ENCODE measurements at regions of chr2 and their contacts with region 1.

Region 1: GRCh38 chr2:68715353-68716041 is 19.1 kb upstream of the ARHGAP25 start:
- DNase-seq: peak; percentile 39 to 55 (median 45)
- H3K4me3 ChIP-seq: peak overlapping the region in 1 of 2 donors; percentile 37
- H3K4me3 Mint-ChIP-seq: peak overlapping the region in 7 of 8 donors; percentile 44 to 76 (median 56)
- H3K27ac ChIP-seq: peak overlapping the region; percentile 29
- H3K27ac Mint-ChIP-seq: peak overlapping the region; percentile 54 to 93 (median 86)
- H3K4me1 ChIP-seq: peaks cover 63% of the 10 kb centered on the region
- H3K4me1 Mint-ChIP-seq: peaks cover 63 to 88% (median 70%) of the 10 kb centered on the region in 4 donors
- H3K27me3 ChIP-seq: no peaks in the 10 kb centered on the region
- H3K27me3 Mint-ChIP-seq: no peaks in the 10 kb centered on the region

Region 2: GRCh38 chr2:68403199-68403644 is 312.3 kb before region 1 on chr2:
- CTCF ChIA-PET with region 1: no interaction called
- POLR2A ChIA-PET with region 1: no interaction called
- intact Hi-C with region 1: no loop called
- DNase-seq: peak in 1 of 5 donors; percentile 31
- H3K4me3 ChIP-seq: no peak overlapping the region
- H3K4me3 Mint-ChIP-seq: peak overlapping the region in 4 of 8 donors; percentile 30 to 66 (median 54)
- H3K27ac ChIP-seq: no peak overlapping the region
- H3K27ac Mint-ChIP-seq: peak overlapping the region in 5 of 7 donors; percentile 7 to 82 (median 43)
- H3K4me1 ChIP-seq: peaks cover 33% of the 10 kb centered on the region
- H3K4me1 Mint-ChIP-seq: peaks cover 6 to 37% (median 29%) of the 10 kb centered on the region in 4 donors
- H3K27me3 ChIP-seq: no peaks in the 10 kb centered on the region
- H3K27me3 Mint-ChIP-seq: peaks cover 0 to 18% of the 10 kb centered on the region in 2 donors

Region 3: GRCh38 chr2:68726608-68727367 is 11.3 kb after region 1 on chr2:
- CTCF ChIA-PET with region 1: interaction called, 92 read pairs
- POLR2A ChIA-PET with region 1: interaction called, 117 read pairs
- intact Hi-C with region 1: loop called (anchors 1 kb)
- DNase-seq: peak; percentile 78 to 93 (median 81)
- H3K4me3 ChIP-seq: peak overlapping the region; percentile 6 to 9
- H3K4me3 Mint-ChIP-seq: peak overlapping the region; percentile 18 to 73 (median 58)
- H3K27ac ChIP-seq: peak overlapping the region; percentile 44
- H3K27ac Mint-ChIP-seq: peak overlapping the region; percentile 83 to 95 (median 88)
- H3K4me1 ChIP-seq: peaks cover 74% of the 10 kb centered on the region
- H3K4me1 Mint-ChIP-seq: peaks cover 57 to 85% (median 72%) of the 10 kb centered on the region in 4 donors
- H3K27me3 ChIP-seq: no peaks in the 10 kb centered on the region
- H3K27me3 Mint-ChIP-seq: no peaks in the 10 kb centered on the region

Region 4: DNA sequence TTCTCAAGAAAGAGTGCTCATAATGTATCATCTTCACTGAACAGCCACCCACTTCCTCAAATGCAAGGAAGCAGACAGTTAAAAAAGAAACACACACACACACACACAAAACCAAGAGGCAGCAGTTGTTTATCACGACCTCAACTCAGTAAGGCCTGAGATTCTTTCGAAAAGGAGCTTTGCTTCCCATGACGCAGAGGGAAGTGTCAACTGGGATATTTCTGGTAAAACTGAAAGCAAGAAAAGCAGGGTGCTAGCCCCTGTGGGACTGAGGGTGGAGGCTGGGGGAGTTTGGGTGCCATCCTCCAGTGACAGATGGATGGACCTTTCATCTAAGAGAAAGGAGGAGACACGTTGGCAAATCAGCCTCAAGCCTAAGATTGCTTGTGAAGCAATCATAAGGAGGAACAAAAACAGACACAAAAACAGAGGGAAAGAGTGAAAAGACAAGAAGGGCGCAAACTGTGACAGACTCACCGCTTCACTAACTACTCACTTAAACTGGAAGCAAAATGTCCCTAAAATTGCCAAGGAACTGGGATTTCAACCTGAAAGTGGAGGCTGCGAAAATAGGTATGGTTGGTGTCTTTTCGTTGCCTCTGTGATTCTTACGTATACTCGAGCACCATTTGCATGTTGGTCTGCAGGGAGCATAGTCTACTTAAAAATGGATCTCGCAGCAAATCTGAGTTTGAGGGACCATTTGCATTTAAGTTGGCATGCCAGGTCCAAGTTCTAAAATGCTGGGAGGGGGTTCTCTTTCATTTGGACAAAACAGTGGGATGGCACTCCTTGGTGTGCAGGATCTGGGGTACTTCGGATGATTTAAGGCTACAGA is 19.4 kb after region 1 on chr2 and contains the start of gene ARHGAP25:
- CTCF ChIA-PET with region 1: interaction called, 745 read pairs
- POLR2A ChIA-PET with region 1: interaction called, 659 read pairs
- intact Hi-C with region 1: loop called (anchors 1 kb)
- DNase-seq: peak; percentile 58 to 79 (median 61)
- H3K4me3 ChIP-seq: peak within 1 kb of the TSS; percentile 83 to 99
- H3K4me3 Mint-ChIP-seq: no peak within 1 kb of the TSS
- H3K27ac ChIP-seq: peak within 1 kb of the TSS; percentile 81
- H3K27ac Mint-ChIP-seq: no peak within 1 kb of the TSS
- H3K4me1 ChIP-seq: peaks cover 54% of the 10 kb centered on the region
- H3K4me1 Mint-ChIP-seq: peaks cover 23 to 44% (median 34%) of the 10 kb centered on the region in 4 donors
- H3K27me3 ChIP-seq: no peaks in the 10 kb centered on the region
- H3K27me3 Mint-ChIP-seq: no peaks in the 10 kb centered on the region
- total RNA-seq, gene ARHGAP25: 162 to 163 TPM

Region 5: DNA sequence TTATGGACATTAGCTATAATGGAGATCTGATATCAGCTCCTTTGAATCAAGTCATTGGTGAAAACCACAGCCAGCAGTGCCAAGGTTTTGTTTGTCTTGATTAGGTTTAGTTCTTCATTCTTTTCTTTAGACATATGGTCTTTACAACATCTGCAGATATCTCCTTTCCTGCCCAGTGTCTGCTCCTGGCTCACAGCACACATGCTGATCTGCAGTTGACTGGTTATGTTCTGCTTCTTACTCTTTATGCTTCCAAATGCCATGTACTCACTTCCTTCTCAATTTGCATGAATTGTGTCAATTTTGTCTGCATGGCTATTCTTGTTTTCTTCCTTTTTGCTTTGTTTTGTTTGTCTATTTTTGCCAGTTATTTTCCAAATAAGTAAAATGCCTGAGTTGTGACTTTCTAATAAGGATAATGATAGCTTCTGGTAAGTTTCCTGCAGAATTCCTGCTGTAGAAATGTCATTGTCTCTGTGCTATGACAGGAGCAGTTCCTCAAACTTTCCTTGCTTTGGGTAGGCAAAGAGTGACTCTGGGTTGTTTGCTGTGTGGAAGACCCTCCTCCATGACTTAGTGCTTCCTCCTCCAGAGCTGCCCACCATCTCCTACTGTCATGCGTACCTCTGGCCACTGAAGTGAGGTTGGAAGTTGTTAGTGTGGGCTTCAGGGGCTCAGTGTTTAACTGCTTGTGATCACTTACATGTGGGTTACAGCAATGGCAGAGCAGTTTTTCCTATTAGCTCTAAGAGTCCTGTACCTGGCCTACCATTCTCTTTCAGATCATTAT is 27.3 kb after region 1 on chr2:
- CTCF ChIA-PET with region 1: interaction called, 745 read pairs
- POLR2A ChIA-PET with region 1: interaction called, 659 read pairs
- intact Hi-C with region 1: loop called (anchors 1 kb)
- DNase-seq: no peak
- H3K4me3 ChIP-seq: peak overlapping the region in 1 of 2 donors; percentile 29
- H3K4me3 Mint-ChIP-seq: peak overlapping the region; percentile 61 to 88 (median 79)
- H3K27ac ChIP-seq: no peak overlapping the region
- H3K27ac Mint-ChIP-seq: peak overlapping the region in 6 of 7 donors; percentile 78 to 93 (median 81)
- H3K4me1 ChIP-seq: peaks cover 99% of the 10 kb centered on the region
- H3K4me1 Mint-ChIP-seq: peaks cover 78 to 97% (median 89%) of the 10 kb centered on the region in 4 donors
- H3K27me3 ChIP-seq: no peaks in the 10 kb centered on the region
- H3K27me3 Mint-ChIP-seq: no peaks in the 10 kb centered on the region

Region 6: GRCh38 chr2:68774569-68775271 is 59.2 kb after region 1 on chr2:
- CTCF ChIA-PET with region 1: interaction called, 11 read pairs
- POLR2A ChIA-PET with region 1: interaction called, 23 read pairs
- intact Hi-C with region 1: loop called (anchors 2 kb)
- DNase-seq: peak; percentile 47 to 79 (median 51)
- H3K4me3 ChIP-seq: peak overlapping the region; percentile 57 to 63
- H3K4me3 Mint-ChIP-seq: peak overlapping the region; percentile 84 to 95 (median 87)
- H3K27ac ChIP-seq: peak overlapping the region; percentile 84
- H3K27ac Mint-ChIP-seq: peak overlapping the region; percentile 95 to 99 (median 97)
- H3K4me1 ChIP-seq: peaks cover 97% of the 10 kb centered on the region
- H3K4me1 Mint-ChIP-seq: peaks cover 78 to 90% (median 86%) of the 10 kb centered on the region in 4 donors
- H3K27me3 ChIP-seq: no peaks in the 10 kb centered on the region
- H3K27me3 Mint-ChIP-seq: no peaks in the 10 kb centered on the region

Region 7: DNA sequence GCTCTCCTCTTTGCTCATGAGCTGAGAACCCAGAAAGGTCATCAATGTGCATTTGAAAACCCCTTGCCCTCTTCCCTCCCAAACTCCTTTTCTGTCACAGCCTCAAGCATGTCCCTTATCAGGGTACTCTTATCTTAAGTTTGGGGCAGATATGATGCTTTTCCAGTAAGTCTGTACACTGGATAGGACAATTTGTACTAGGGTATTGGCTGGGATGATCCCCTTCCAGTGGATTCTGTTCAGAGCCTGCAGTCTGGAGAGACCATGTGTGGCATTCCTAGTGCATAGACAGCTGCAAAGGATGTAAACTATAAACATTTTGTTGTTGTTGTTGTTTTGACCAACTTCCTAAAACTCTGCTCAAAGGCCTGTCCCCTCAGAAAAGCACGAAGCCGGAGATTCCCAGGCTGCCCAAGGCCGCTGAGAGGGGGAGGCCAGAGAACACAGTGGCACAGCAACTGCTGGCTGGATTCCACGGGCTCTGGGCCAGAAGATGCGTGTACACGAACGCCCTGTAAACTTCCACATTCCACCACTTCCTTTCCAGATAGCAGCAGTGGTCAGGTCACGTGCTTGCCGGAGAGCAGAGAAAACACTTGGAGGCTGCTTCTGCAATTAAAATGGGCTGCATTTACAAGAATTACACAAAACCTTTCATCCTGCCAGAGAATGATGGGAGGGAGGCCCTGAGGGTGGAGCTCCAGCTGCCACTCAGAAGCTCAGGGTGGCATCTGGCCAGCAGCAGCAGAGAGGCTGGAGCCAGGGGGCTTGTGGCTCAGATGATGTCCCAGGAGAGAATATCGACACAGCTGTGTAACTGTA is 113.6 kb after region 1 on chr2:
- CTCF ChIA-PET with region 1: interaction called, 106 read pairs
- POLR2A ChIA-PET with region 1: interaction called, 15 read pairs
- intact Hi-C with region 1: no loop called
- DNase-seq: peak; percentile 80 to 90 (median 83)
- H3K4me3 ChIP-seq: peak overlapping the region in 1 of 2 donors; percentile 32
- H3K4me3 Mint-ChIP-seq: peak overlapping the region; percentile 17 to 91 (median 80)
- H3K27ac ChIP-seq: peak overlapping the region; percentile 65
- H3K27ac Mint-ChIP-seq: peak overlapping the region; percentile 90 to 94 (median 92)
- H3K4me1 ChIP-seq: peaks cover 59% of the 10 kb centered on the region
- H3K4me1 Mint-ChIP-seq: peaks cover 50 to 73% (median 62%) of the 10 kb centered on the region in 4 donors
- H3K27me3 ChIP-seq: no peaks in the 10 kb centered on the region
- H3K27me3 Mint-ChIP-seq: no peaks in the 10 kb centered on the region

Region 8: DNA sequence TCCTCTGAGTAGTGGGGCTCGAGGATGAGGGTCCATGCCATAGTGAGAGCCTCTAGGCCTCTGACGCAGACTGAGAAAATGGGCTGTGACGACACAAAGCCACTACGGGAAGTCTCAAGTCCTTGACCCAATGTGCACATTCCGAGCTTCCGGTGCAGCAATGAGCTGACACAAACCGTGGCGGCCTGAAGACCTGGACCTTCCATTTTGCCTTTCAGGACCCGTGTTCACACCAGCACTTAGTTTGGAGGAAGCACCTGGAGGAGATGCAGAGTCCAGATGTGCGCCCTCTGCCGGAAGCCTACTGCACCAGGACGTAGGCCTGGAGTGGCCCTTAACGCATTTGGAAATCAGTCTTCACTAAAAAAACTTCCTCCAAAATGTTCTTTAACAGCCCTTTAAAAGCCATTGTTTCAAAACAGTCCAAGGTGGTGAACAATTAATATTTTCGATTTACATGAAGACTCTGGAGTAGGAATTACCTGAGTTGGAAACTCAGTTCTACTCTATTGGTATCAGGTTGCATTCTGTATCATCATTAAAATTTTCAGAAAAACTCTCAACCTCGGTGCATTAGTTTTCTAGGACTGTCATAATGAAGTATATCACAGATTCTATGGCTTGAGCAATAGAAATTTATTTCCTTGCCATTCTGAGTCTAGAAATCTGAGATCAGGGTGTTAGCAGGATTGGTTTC is 121.8 kb after region 1 on chr2:
- CTCF ChIA-PET with region 1: interaction called, 106 read pairs
- POLR2A ChIA-PET with region 1: no interaction called
- intact Hi-C with region 1: no loop called
- DNase-seq: peak; percentile 50 to 62 (median 54)
- H3K4me3 ChIP-seq: no peak overlapping the region
- H3K4me3 Mint-ChIP-seq: peak overlapping the region in 2 of 8 donors; percentile 24 to 38
- H3K27ac ChIP-seq: no peak overlapping the region
- H3K27ac Mint-ChIP-seq: peak overlapping the region in 3 of 7 donors; percentile 47 to 66 (median 60)
- H3K4me1 ChIP-seq: peaks cover 26% of the 10 kb centered on the region
- H3K4me1 Mint-ChIP-seq: peaks cover 19 to 44% (median 31%) of the 10 kb centered on the region in 4 donors
- H3K27me3 ChIP-seq: no peaks in the 10 kb centered on the region
- H3K27me3 Mint-ChIP-seq: no peaks in the 10 kb centered on the region

Measured in CD4-positive, alpha-beta memory T cell (primary cell).